K562 (cell line): ENCODE measurements at regions of chr2 and their contacts with region 1.

Region 1: DNA sequence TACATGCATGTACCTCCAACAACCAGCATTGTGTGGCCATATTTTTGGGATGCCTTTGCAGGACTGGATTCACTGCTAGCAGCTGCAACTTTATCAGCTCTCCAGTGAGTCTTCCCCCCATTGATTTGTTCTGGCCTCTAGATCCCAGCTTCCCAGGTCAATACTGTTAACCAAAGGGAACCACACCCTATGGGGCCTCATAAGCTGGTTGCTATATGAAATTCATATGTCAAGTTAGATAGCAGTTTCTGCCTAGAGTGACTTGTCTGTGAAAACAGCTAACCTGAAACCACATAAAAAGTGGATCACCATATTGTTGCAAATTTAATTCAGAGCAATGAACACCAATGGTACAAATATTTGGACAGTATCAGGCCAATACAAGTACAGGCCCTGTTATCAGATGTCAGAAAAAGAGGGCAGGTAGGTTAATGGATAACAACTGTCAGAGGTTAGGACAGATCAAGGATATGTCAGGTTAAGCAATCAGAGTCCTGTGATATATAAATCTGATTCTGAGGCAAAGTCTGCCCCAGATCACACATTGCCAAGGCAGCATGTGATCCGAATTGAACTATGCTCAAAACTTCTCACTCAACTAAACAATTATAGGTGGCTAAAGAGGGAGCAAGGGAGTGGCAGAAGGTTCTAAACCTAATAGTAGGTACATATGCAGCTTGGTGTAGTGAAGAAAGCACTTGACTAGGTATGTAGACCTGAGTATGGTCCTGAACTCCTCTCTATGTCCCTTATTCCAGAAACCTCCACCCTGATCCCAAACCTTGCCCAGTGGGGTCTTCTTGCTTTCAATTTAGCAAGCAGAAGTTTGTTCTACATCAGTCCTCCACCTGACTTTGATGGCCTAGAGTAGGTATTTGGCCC is 310.2 kb upstream of the STON1 start:
- DNase-seq: peak in 1 of 4 experiments; percentile 23
- ATAC-seq: peak; percentile 37; the same call in 1 of the 3 replicates
- H3K4me3 ChIP-seq: no peak overlapping the region
- H3K27ac ChIP-seq: no peak overlapping the region
- H3K4me1 ChIP-seq: peaks cover 0 to 3% of the 10 kb centered on the region in 2 experiments; a peak in 2 of 5 replicates
- H3K27me3 ChIP-seq: no peaks in the 10 kb centered on the region
- CTCF ChIP-seq: no peak
- EP300 ChIP-seq: no peak
- POLR2A ChIP-seq: no peak
- RAD21 ChIP-seq: no peak

Region 2: GRCh38 chr2:47344890-47345589 is 874.8 kb before region 1 on chr2:
- CTCF ChIA-PET with region 1: no interaction called
- POLR2A ChIA-PET with region 1: no interaction called
- in situ Hi-C with region 1: no loop called
- intact Hi-C with region 1: no loop called
- DNase-seq: peak; percentile 72 to 81 (median 77)
- ATAC-seq: peak; percentile 91
- H3K4me3 ChIP-seq: no peak overlapping the region
- H3K27ac ChIP-seq: peak overlapping the region; percentile 42; the same call in 2 of the 3 replicates
- H3K4me1 ChIP-seq: peaks cover 15 to 19% of the 10 kb centered on the region in 2 experiments; a peak in 4 of 5 replicates
- H3K27me3 ChIP-seq: no peaks in the 10 kb centered on the region
- CTCF ChIP-seq: peak in 1 of 3 experiments; percentile 26; a peak in 1 of 6 replicates
- EP300 ChIP-seq: no peak
- POLR2A ChIP-seq: no peak
- RAD21 ChIP-seq: no peak

Region 3: DNA sequence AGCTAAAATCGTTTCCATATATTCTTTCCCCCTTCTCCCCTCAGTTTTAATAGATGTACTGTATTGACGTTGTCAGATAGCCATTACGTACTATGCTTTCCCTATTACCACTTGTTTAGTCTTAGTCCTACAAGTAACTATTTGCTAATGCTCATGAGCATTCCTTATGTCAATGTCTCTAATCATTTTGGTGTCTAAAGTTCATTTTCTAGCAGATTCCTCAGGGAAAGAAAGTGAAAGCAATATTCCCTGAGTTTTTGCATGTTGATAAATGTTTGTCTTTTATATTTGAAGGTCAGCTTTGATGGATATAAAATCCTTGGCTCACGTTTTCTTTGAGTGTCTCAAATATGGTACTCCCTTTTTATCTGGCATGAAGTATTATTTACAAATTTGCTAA is 56.8 kb after region 1 on chr2:
- CTCF ChIA-PET with region 1: no interaction called
- POLR2A ChIA-PET with region 1: no interaction called
- in situ Hi-C with region 1: no loop called
- intact Hi-C with region 1: no loop called
- DNase-seq: no peak
- ATAC-seq: no peak
- H3K4me3 ChIP-seq: no peak overlapping the region
- H3K27ac ChIP-seq: no peak overlapping the region
- H3K4me1 ChIP-seq: peaks cover 0 to 8% of the 10 kb centered on the region in 2 experiments; a peak in 3 of 5 replicates
- H3K27me3 ChIP-seq: no peaks in the 10 kb centered on the region
- CTCF ChIP-seq: no peak
- EP300 ChIP-seq: no peak
- POLR2A ChIP-seq: no peak
- RAD21 ChIP-seq: no peak

Region 4: GRCh38 chr2:48414980-48415835 is 195.4 kb after region 1 on chr2:
- CTCF ChIA-PET with region 1: no interaction called
- POLR2A ChIA-PET with region 1: no interaction called
- in situ Hi-C with region 1: no loop called
- intact Hi-C with region 1: loop called (anchors 5 kb)
- DNase-seq: no peak
- ATAC-seq: no peak
- H3K4me3 ChIP-seq: no peak overlapping the region
- H3K27ac ChIP-seq: no peak overlapping the region
- H3K4me1 ChIP-seq: peaks cover 0 to 12% of the 10 kb centered on the region in 2 experiments; a peak in 2 of 5 replicates
- H3K27me3 ChIP-seq: no peaks in the 10 kb centered on the region; a peak in 1 of 5 replicates
- CTCF ChIP-seq: no peak
- EP300 ChIP-seq: no peak
- POLR2A ChIP-seq: no peak
- RAD21 ChIP-seq: no peak

Region 5: DNA sequence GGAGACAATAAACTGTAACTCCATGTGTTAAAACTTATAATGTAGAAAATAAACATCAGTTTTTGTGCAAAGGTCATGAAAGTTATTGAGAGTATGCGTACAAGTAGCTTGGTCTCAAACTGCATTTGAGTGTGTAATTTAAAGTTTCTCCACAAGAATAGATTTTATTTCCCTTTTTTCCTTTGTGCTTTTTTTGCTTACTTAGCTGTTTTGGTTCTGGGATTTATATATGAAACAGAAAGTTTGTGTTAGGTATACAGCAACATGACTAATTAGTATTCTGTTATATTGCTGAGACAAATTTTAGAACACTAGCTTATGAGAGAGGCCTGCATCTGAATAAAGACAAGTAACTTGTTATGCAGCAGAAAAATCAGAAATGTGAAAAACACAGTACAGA is 465.3 kb after region 1 on chr2:
- CTCF ChIA-PET with region 1: no interaction called
- POLR2A ChIA-PET with region 1: no interaction called
- in situ Hi-C with region 1: no loop called
- intact Hi-C with region 1: no loop called
- DNase-seq: no peak
- ATAC-seq: no peak
- H3K4me3 ChIP-seq: no peak overlapping the region
- H3K27ac ChIP-seq: no peak overlapping the region
- H3K4me1 ChIP-seq: no peaks in the 10 kb centered on the region
- H3K27me3 ChIP-seq: peaks cover 0 to 5% of the 10 kb centered on the region in 2 experiments; a peak in 2 of 5 replicates
- CTCF ChIP-seq: no peak
- EP300 ChIP-seq: no peak
- POLR2A ChIP-seq: no peak
- RAD21 ChIP-seq: no peak